Transverse colon (tissue), 4 donors: ENCODE measurements at regions of chr16 and their contacts with region 1.

Region 1: DNA sequence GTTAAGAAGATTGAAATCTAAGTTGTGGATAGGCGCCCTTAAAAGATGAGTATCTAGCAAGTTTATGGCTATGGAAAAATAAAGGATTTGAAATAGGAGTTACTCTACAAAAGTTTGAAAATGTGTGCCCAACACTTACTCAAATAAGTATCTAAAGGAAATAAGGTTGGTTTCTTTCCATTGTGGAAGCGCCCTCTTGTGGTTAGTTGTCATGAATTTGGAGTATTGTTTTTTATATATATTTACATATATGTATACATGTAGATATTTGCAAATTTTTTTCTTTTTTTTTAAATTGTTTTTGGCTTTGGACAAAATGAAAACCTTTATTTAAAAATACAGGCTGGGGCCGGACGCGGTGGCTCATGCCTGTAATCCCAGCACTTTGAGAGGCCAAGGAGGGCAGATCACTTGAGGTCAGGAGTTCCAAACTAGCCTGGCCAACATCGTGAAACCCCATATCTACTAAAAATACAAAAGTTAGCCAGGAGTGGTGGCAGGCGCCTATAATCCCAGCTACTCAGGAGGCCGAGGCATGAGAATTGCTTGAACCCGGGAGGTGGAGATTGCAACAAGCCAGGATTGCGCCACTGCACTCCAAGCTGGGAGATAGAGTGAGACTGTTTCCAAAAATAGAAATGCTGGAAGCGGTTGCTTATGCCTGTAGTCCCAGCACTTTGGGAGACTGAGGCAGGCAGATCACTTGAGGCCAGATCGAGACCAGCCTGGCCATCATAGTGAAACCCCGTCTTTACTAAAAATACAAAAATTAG is 24.0 kb upstream of the VPS4A start:
- DNase-seq: peak; percentile 26
- H3K4me3 ChIP-seq: no peak overlapping the region
- H3K27ac ChIP-seq: no peak overlapping the region
- H3K4me1 ChIP-seq: peaks cover 0 to 3% (median 0%) of the 10 kb centered on the region in 4 donors
- H3K27me3 ChIP-seq: no peaks in the 10 kb centered on the region
- CTCF ChIP-seq: peak; percentile 65 to 74 (median 67)
- EP300 ChIP-seq: no peak
- POLR2A ChIP-seq: no peak

Region 2: GRCh38 chr16:68893710-68894705 is 393.1 kb before region 1 on chr16:
- in situ Hi-C with region 1: loop called in 1 of 4 experiments (anchors 25 kb)
- intact Hi-C with region 1: no loop called
- DNase-seq: peak; percentile 30
- H3K4me3 ChIP-seq: no peak overlapping the region
- H3K27ac ChIP-seq: no peak overlapping the region
- H3K4me1 ChIP-seq: peaks cover 0 to 4% (median 2%) of the 10 kb centered on the region in 4 donors
- H3K27me3 ChIP-seq: no peaks in the 10 kb centered on the region
- CTCF ChIP-seq: no peak
- EP300 ChIP-seq: no peak
- POLR2A ChIP-seq: no peak

Region 3: DNA sequence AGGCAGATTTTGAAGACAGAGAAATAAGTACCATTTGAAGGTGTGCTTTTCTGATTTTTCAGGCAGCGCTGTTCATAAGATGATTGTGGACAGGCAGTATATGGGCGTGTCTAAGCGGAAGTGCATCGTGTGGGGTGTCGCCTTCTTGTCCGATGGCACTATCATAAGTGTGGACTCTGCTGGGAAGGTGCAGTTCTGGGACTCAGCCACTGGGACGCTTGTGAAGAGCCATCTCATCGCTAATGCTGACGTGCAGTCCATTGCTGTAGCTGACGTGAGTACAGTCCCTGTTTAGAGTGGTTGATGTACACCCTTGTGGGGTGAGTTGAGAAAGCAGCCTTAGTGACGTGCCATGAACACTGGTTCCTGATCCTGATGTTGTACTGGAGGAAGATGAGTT is 144.0 kb before region 1 on chr16:
- in situ Hi-C with region 1: loop called in 1 of 4 experiments (anchors 10 kb)
- intact Hi-C with region 1: no loop called
- DNase-seq: peak; percentile 25
- H3K4me3 ChIP-seq: no peak overlapping the region
- H3K27ac ChIP-seq: no peak overlapping the region
- H3K4me1 ChIP-seq: no peaks in the 10 kb centered on the region
- H3K27me3 ChIP-seq: no peaks in the 10 kb centered on the region
- CTCF ChIP-seq: peak in 4 of 5 experiments; percentile 26 to 62 (median 36)
- EP300 ChIP-seq: no peak
- POLR2A ChIP-seq: no peak

Region 4: DNA sequence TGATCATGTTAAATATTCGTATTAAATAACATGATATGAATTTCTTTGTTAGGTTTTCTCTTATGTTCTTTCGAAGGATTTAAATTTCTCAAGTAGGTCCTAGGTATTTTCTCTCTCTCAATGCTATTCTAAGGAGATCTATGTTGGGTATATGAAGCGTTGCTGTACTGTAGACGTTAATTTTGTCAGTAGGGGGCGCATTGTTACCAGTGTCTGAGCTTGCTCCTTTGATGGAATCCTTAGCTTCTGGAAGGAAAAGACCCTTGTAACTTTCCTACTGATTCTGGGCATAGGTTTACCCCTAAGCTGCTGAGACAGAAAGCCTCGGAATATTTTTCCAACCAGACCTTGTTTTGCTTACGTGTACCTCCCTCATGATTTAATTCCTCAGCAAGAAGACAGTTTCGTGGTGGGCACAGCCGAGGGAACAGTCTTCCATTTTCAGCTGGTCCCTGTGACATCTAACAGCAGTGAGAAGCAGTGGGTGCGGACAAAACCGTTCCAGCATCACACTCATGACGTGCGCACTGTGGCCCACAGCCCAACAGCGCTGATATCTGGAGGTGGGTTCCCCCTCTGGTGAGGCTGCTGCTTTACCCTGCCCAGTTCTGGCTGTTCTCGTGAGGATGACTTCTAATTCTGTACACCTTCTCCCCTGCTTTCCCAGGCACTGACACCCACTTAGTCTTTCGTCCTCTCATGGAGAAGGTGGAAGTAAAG is 136.8 kb before region 1 on chr16:
- in situ Hi-C with region 1: loop called (anchors 5 to 10 kb)
- intact Hi-C with region 1: loop called (anchors 1 kb)
- DNase-seq: peak; percentile 60
- H3K4me3 ChIP-seq: no peak overlapping the region
- H3K27ac ChIP-seq: no peak overlapping the region
- H3K4me1 ChIP-seq: no peaks in the 10 kb centered on the region
- H3K27me3 ChIP-seq: no peaks in the 10 kb centered on the region
- CTCF ChIP-seq: peak; percentile 75 to 83 (median 80)
- EP300 ChIP-seq: no peak
- POLR2A ChIP-seq: no peak

Region 5: GRCh38 chr16:69339289-69340108 is 52.4 kb after region 1 on chr16 and contains the starts of genes COG8 and NIP7:
- in situ Hi-C with region 1: no loop called
- intact Hi-C with region 1: no loop called
- DNase-seq: peak; percentile 96
- H3K4me3 ChIP-seq: peak within 1 kb of the TSS; percentile 67 to 91 (median 86)
- H3K27ac ChIP-seq: peak within 1 kb of the TSS; percentile 89 to 95 (median 92)
- H3K4me1 ChIP-seq: peaks cover 17 to 28% (median 21%) of the 10 kb centered on the region in 4 donors
- H3K27me3 ChIP-seq: no peaks in the 10 kb centered on the region
- CTCF ChIP-seq: peak; percentile 78 to 98 (median 92)
- EP300 ChIP-seq: no peak
- POLR2A ChIP-seq: peak; percentile 69
- total RNA-seq, gene COG8: 29.5 to 52.0 (median 48.3) TPM
- total RNA-seq, gene NIP7: 1.8 to 17.3 (median 8.9) TPM